ENCODE measurements at regions of chr7 and their contacts with region 1.

Region 1: DNA sequence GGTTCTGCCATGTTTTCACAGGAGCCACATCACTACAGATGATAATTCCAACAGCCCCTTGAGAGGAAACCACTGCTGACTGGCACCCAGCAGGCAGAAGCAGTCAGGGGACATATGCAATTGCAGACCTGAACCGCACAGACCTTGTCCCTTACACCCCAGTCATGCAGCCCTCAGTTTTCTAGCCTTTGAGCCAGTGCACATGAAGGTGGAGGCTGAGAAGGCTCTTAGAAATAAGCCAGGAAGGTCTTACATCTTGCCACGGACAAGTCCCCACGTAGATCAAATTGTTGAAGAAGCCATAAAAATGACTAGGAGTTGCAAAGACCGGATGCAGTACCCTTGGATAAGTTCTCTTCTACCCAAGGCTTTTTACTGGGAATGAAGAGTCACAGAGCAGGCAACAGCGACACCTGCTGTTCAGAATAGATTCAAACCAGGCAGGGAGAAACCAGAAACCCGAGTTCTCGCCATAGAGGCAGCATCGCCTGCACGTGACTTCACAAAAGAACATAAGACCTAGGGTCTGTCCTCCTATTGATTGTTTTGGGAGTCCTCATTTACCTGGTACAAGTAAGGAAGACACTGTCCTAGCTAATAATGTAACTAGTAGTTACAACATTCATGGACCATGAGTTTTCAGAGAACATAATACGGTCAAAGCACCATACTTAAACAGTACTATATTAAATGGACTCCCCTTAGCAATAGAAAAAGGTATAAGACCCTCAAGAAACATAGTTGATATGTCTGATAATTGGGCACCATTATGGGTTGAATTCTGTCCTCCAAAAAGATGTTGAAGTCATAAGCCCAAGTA is 11.1 kb downstream of the STEAP1B start:
- DNase-seq: peak; percentile 73
- ATAC-seq: peak; percentile 94
- H3K4me3 ChIP-seq: no peak overlapping the region
- H3K27ac ChIP-seq: no peak overlapping the region
- H3K4me1 ChIP-seq: peaks cover 2% of the 10 kb centered on the region
- H3K27me3 ChIP-seq: no peaks in the 10 kb centered on the region
- CTCF ChIP-seq: peak; percentile 95
- POLR2A ChIP-seq: no peak
- RAD21 ChIP-seq: peak; percentile 95

Region 2: GRCh38 chr7:22103255-22103969 is 385.4 kb before region 1 on chr7:
- CTCF ChIA-PET with region 1: no interaction called
- POLR2A ChIA-PET with region 1: no interaction called
- dilution Hi-C with region 1: loop called (anchors 25 kb)
- in situ Hi-C with region 1: loop called (anchors 5 kb)
- intact Hi-C with region 1: loop called (anchors 2 kb)
- DNase-seq: peak; percentile 77
- ATAC-seq: peak; percentile 94
- H3K4me3 ChIP-seq: no peak overlapping the region
- H3K27ac ChIP-seq: no peak overlapping the region
- H3K4me1 ChIP-seq: no peaks in the 10 kb centered on the region
- H3K27me3 ChIP-seq: peaks cover 15% of the 10 kb centered on the region
- CTCF ChIP-seq: peak; percentile 80
- POLR2A ChIP-seq: no peak
- RAD21 ChIP-seq: peak; percentile 68

Region 3: DNA sequence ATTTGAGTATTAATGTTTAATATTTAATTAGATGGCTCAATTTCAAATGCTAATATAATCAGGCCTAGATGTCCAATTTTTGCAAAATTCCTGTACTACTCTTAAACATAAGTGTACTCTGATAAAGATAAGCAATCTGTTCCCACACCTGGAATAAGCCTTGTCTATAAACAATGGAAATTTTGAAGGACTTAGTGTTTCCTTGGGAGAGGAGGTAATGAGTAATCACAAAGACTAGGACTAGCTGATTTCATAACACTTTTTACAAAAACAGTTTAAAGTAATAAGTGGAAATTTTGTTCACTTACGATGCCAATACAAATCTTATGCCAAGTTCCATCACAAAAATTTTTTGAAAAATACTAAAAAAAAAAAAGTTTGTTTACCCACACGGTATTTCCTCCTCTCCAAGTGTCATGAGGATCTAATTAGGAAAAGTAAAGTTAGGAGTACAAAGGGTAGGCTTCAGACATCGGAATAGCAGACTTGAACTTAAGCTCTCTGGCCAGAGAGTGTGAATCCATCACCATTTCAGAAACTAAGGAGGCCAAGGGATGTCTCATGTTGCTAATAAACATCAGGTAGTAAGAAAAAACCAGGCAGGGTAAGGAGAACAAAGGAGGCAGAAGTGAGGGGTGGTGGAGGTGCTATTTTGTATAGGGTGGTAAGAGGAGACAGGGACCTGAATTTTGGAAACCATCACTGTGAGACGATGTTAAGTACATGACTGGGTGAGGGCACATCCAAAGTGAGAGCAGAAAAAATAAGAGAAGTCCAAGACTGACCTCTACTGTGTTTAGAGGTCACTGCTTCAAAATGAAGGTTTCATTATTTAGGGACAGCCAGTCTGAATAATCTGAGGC is 193.2 kb before region 1 on chr7:
- CTCF ChIA-PET with region 1: no interaction called
- POLR2A ChIA-PET with region 1: no interaction called
- dilution Hi-C with region 1: no loop called
- in situ Hi-C with region 1: no loop called
- intact Hi-C with region 1: loop called (anchors 2 kb)
- DNase-seq: no peak
- ATAC-seq: 0 out of 2 replicates have a peak, but pooled peaks have one; percentile 24
- H3K4me3 ChIP-seq: no peak overlapping the region
- H3K27ac ChIP-seq: no peak overlapping the region
- H3K4me1 ChIP-seq: no peaks in the 10 kb centered on the region
- H3K27me3 ChIP-seq: peaks cover 2% of the 10 kb centered on the region
- CTCF ChIP-seq: 0 out of 2 replicates have a peak, but pooled peaks have one; percentile 2
- POLR2A ChIP-seq: no peak
- RAD21 ChIP-seq: no peak

Region 4: GRCh38 chr7:22319424-22320403 is 169.1 kb before region 1 on chr7:
- CTCF ChIA-PET with region 1: no interaction called
- POLR2A ChIA-PET with region 1: no interaction called
- dilution Hi-C with region 1: no loop called
- in situ Hi-C with region 1: no loop called
- intact Hi-C with region 1: loop called (anchors 10 kb)
- DNase-seq: no peak
- ATAC-seq: no peak
- H3K4me3 ChIP-seq: no peak overlapping the region
- H3K27ac ChIP-seq: no peak overlapping the region
- H3K4me1 ChIP-seq: no peaks in the 10 kb centered on the region
- H3K27me3 ChIP-seq: no peaks in the 10 kb centered on the region
- CTCF ChIP-seq: no peak
- POLR2A ChIP-seq: no peak
- RAD21 ChIP-seq: no peak

Measured in IMR-90 (cell line).